MCF 10A (cell line): ENCODE measurements at regions of chr6 and their contacts with region 1.

Region 1: GRCh38 chr6:144284783-144285547 is at the start of gene UTRN:
- DNase-seq: peak; percentile 89
- H3K4me3 Mint-ChIP-seq: peak within 1 kb of the TSS; percentile 97
- H3K27ac Mint-ChIP-seq: peak within 1 kb of the TSS; percentile 74
- H3K4me1 Mint-ChIP-seq: peaks cover 16% of the 10 kb centered on the region
- H3K27me3 Mint-ChIP-seq: no peaks in the 10 kb centered on the region
- CTCF ChIP-seq: no peak
- total RNA-seq, gene UTRN: 78.7 and 84.8 TPM in 2 replicates

Region 2: GRCh38 chr6:144104898-144105487 is 180.0 kb before region 1 on chr6:
- CTCF ChIA-PET with region 1: interaction called, 3 read pairs
- POLR2A ChIA-PET with region 1: interaction called, 5 read pairs
- intact Hi-C with region 1: loop called (anchors 1 kb)
- DNase-seq: peak; percentile 80
- H3K4me3 Mint-ChIP-seq: no peak overlapping the region
- H3K27ac Mint-ChIP-seq: no peak overlapping the region
- H3K4me1 Mint-ChIP-seq: peaks cover 5% of the 10 kb centered on the region
- H3K27me3 Mint-ChIP-seq: no peaks in the 10 kb centered on the region
- CTCF ChIP-seq: peak; percentile 70

Region 3: DNA sequence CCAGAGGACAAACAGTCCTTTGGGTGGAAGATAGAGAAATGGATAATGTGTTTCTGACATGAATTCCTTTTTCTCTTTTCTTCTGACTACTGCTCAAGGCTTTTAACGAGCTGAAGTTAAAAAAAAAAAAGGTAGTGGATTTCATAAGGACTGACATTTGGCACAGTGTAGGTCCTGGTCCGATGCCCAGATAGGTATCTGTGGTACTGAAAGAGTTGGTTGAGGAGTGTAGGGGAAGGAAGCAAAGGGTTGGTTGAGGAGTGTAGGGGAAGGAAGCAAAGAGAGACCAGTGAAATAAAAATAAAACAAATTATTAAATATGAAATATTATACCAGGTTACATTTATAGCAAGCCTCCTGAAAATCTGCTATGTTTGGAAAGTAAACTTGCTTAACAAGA is 12.0 kb after region 1 on chr6:
- CTCF ChIA-PET with region 1: interaction called, 3 read pairs
- POLR2A ChIA-PET with region 1: interaction called, 21 read pairs
- intact Hi-C with region 1: no loop called
- DNase-seq: peak; percentile 41
- H3K4me3 Mint-ChIP-seq: peak overlapping the region; percentile 0
- H3K27ac Mint-ChIP-seq: peak overlapping the region; percentile 57
- H3K4me1 Mint-ChIP-seq: peaks cover 9% of the 10 kb centered on the region
- H3K27me3 Mint-ChIP-seq: no peaks in the 10 kb centered on the region
- CTCF ChIP-seq: no peak

Region 4: GRCh38 chr6:144360401-144360800 is 75.4 kb after region 1 on chr6:
- CTCF ChIA-PET with region 1: no interaction called
- POLR2A ChIA-PET with region 1: no interaction called
- intact Hi-C with region 1: no loop called
- DNase-seq: peak; percentile 69
- H3K4me3 Mint-ChIP-seq: no peak overlapping the region
- H3K27ac Mint-ChIP-seq: no peak overlapping the region
- H3K4me1 Mint-ChIP-seq: peaks cover 24% of the 10 kb centered on the region
- H3K27me3 Mint-ChIP-seq: no peaks in the 10 kb centered on the region
- CTCF ChIP-seq: no peak

Region 5: DNA sequence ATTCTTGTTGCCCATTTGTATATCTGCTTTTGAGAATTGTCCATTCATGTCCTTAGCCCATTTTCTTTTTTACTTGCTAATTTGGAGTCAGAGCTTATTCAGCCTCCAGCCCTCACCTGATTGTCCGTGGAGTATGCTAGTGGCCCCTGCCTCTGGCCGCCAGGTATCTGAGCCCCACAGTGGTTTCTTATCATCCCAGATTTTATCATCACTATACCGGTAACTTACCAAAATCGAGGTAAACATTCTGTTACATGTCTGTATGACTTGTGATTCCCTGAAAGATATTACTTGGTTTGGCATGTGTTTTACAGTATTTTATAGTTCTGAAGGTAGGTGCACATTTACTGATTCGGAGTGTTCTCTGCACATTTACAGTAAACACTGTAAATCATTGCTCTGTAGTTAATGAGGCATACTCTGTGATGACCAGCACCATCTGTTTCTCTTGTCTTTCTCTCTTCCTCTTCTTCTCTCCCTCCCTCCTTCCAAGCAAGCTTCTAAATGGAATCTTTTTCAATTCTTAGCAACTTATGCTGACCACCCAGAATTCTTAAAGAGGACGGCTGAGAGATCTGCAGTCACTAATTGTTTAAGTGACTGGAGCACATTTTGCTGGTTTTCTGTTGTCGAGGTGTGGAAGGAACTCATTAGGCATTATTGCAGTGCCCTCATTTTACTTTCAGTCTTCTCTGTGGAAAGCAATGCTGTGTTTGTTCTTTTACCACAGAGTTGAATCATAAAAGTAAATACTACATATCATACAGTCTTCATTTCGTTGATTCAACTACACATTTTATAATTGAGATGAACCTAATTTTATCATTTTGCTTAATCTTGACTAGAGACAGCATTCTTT is 126.6 kb after region 1 on chr6:
- CTCF ChIA-PET with region 1: no interaction called
- POLR2A ChIA-PET with region 1: interaction called, 16 read pairs
- intact Hi-C with region 1: loop called (anchors 1 kb)
- DNase-seq: no peak
- H3K4me3 Mint-ChIP-seq: no peak overlapping the region
- H3K27ac Mint-ChIP-seq: no peak overlapping the region
- H3K4me1 Mint-ChIP-seq: peaks cover 32% of the 10 kb centered on the region
- H3K27me3 Mint-ChIP-seq: no peaks in the 10 kb centered on the region
- CTCF ChIP-seq: no peak

Region 6: DNA sequence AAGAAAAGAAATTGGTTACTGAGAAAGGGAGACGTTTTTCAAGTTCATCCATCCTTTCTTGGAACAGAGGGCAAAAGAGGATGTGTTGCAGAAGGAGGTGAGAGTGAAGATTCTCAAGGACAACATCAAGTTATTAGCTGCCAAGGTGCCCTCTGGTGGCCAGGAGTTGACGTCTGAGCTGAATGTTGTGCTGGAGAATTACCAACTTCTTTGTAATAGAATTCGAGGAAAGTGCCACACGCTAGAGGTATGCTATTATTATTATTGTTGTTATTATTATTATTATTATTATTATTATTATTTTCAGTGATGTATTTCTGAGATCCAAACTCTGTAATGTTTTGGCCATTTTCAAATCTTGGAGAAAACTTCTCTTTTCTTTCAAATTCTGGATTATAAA is 197.2 kb after region 1 on chr6:
- CTCF ChIA-PET with region 1: interaction called, 4 read pairs
- POLR2A ChIA-PET with region 1: interaction called, 4 read pairs
- intact Hi-C with region 1: loop called (anchors 1 kb)
- DNase-seq: peak; percentile 84
- H3K4me3 Mint-ChIP-seq: no peak overlapping the region
- H3K27ac Mint-ChIP-seq: no peak overlapping the region
- H3K4me1 Mint-ChIP-seq: no peaks in the 10 kb centered on the region
- H3K27me3 Mint-ChIP-seq: no peaks in the 10 kb centered on the region
- CTCF ChIP-seq: peak; percentile 65

Region 7: GRCh38 chr6:144519426-144519825 is 234.5 kb after region 1 on chr6:
- CTCF ChIA-PET with region 1: no interaction called
- POLR2A ChIA-PET with region 1: no interaction called
- intact Hi-C with region 1: no loop called
- DNase-seq: no peak
- H3K4me3 Mint-ChIP-seq: no peak overlapping the region
- H3K27ac Mint-ChIP-seq: no peak overlapping the region
- H3K4me1 Mint-ChIP-seq: no peaks in the 10 kb centered on the region
- H3K27me3 Mint-ChIP-seq: no peaks in the 10 kb centered on the region
- CTCF ChIP-seq: no peak